ENCODE measurements at regions of chr6 and their contacts with region 1.

Region 1: DNA sequence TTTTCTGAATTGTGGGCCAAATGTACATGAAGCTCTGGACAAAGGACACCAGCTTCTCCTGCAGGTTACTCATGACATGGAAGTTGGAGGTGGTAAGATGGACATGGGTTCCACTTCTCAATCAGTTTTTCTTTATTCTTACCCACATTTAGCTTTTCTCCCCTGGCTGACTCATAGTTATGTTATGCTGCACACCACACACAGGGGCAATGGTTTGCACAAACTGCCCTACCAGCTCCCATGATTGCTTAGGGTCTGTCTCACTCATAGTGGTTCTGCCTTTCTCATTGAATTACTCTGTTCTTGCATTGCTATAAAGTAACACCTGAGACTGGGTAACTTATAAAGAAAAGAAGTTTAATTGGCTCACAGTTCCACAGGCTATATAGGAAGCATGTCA is 4.5 kb upstream of the CD109 start:
- DNase-seq: no peak
- H3K4me3 ChIP-seq: no peak overlapping the region
- H3K27ac ChIP-seq: no peak overlapping the region
- H3K27me3 ChIP-seq: no peaks in the 10 kb centered on the region
- CTCF ChIP-seq: no peak

Region 2: DNA sequence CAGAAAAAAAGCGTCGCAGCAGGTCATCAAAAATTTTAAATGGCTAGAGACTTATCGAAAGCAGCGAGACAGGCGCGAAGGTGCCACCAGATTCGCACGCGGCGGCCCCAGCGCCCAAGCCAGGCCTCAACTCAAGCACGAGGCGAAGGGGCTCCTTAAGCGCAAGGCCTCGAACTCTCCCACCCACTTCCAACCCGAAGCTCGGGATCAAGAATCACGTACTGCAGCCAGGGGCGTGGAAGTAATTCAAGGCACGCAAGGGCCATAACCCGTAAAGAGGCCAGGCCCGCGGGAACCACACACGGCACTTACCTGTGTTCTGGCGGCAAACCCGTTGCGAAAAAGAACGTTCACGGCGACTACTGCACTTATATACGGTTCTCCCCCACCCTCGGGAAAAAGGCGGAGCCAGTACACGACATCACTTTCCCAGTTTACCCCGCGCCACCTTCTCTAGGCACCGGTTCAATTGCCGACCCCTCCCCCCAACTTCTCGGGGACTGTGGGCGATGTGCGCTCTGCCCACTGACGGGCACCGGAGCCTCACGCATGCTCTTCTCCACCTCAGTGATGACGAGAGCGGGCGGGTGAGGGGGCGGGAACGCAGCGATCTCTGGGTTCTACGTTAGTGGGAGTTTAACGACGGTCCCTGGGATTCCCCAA is 170.7 kb before region 1 on chr6 and contains the start of gene EEF1A1:
- CTCF ChIA-PET with region 1: no interaction called
- POLR2A ChIA-PET with region 1: no interaction called
- DNase-seq: peak; percentile 100
- H3K4me3 ChIP-seq: peak within 1 kb of the TSS; percentile 99
- H3K27ac ChIP-seq: peak within 1 kb of the TSS; percentile 100
- H3K27me3 ChIP-seq: no peaks in the 10 kb centered on the region
- CTCF ChIP-seq: no peak
- polyA plus RNA-seq, gene EEF1A1: 24,076 and 25,115 TPM in 2 replicates

Region 3: GRCh38 chr6:73644941-73645591 is 46.4 kb before region 1 on chr6:
- CTCF ChIA-PET with region 1: interaction called, 10 read pairs
- POLR2A ChIA-PET with region 1: no interaction called
- DNase-seq: no peak
- H3K4me3 ChIP-seq: no peak overlapping the region
- H3K27ac ChIP-seq: no peak overlapping the region
- H3K27me3 ChIP-seq: no peaks in the 10 kb centered on the region
- CTCF ChIP-seq: no peak

Region 4: DNA sequence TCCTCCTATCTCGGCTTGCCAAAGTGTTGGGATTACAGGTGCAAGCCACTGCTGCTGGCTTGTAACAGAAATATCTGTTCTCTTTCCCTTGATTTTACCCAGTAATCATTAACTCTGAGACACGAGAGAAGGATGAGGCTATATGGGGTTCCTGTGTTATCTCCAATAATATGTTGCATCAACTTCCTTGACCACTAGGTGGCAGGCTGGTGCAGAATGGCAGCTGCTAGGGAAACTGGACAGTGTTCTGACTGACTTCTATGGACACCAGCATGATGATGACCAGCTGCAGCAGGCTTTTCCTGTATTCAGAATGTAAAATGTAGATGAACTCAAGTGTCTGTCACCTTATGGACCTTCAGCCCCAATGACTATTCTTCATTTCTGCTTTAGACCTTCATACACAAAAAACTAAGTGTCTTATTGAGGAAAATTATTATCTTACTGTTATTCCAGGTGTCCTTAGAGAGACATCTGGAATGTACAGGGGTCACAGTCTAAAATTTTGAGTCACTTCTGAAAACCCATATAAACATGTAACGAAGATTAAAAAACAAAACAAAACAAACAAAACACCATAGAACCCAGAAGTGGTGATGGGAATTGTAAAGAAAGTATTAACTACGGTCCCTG is 15.9 kb before region 1 on chr6:
- CTCF ChIA-PET with region 1: interaction called, 14 read pairs
- POLR2A ChIA-PET with region 1: interaction called, 3 read pairs
- DNase-seq: peak; percentile 61
- H3K4me3 ChIP-seq: no peak overlapping the region
- H3K27ac ChIP-seq: no peak overlapping the region
- H3K27me3 ChIP-seq: no peaks in the 10 kb centered on the region
- CTCF ChIP-seq: peak; percentile 93

Region 5: DNA sequence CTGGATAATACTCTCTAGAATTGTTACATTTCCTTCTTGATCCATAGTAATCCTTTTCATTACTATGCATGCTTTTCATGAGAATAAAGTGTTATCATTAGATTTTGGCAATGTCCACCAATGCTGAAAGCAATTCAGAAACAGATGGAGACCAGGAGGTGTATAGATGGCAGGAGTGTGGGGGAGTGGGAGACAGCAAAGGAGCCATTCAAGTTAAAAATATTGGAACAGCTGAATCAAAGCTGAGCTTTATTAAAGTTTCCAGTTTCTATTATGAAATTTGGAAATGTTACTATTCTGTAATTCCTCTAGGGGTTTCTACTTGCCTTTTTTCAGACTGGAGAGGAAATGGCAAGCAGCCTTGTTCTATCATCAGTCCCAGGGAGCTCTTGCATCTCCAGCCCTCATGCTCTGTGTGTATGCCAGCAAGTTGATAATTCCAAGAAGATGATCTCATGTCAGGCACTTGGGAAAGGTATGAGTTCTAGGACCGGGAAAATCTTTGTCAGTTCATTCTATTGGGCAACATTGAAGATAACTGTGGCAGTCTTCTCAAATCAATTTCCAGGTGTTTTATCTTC is 232.5 kb after region 1 on chr6:
- CTCF ChIA-PET with region 1: no interaction called
- POLR2A ChIA-PET with region 1: no interaction called
- DNase-seq: no peak
- H3K4me3 ChIP-seq: no peak overlapping the region
- H3K27ac ChIP-seq: no peak overlapping the region
- H3K27me3 ChIP-seq: no peaks in the 10 kb centered on the region
- CTCF ChIP-seq: no peak